ENCODE measurements at regions of chr9 and their contacts with region 1.

Region 1: GRCh38 chr9:19102631-19103345 is at the start of gene HAUS6:
- DNase-seq: peak; percentile 98
- ATAC-seq: peak; percentile 96
- H3K4me3 Mint-ChIP-seq: peak within 1 kb of the TSS; percentile 98
- H3K27ac Mint-ChIP-seq: peak within 1 kb of the TSS; percentile 97
- H3K4me1 Mint-ChIP-seq: peaks cover 21% of the 10 kb centered on the region
- H3K27me3 Mint-ChIP-seq: no peaks in the 10 kb centered on the region
- CTCF ChIP-seq: peak; percentile 36
- total RNA-seq, gene HAUS6: 30.8 to 35.8 TPM

Region 2: GRCh38 chr9:19048966-19049916 is 53.5 kb before region 1 on chr9 and contains the start of gene RRAGA:
- CTCF ChIA-PET with region 1: interaction called, 3 read pairs
- POLR2A ChIA-PET with region 1: interaction called, 5 read pairs
- intact Hi-C with region 1: loop called (anchors 2 kb)
- DNase-seq: peak; percentile 96
- ATAC-seq: peak; percentile 93
- H3K4me3 Mint-ChIP-seq: peak within 1 kb of the TSS; percentile 98
- H3K27ac Mint-ChIP-seq: peak within 1 kb of the TSS; percentile 97
- H3K4me1 Mint-ChIP-seq: peaks cover 26% of the 10 kb centered on the region
- H3K27me3 Mint-ChIP-seq: no peaks in the 10 kb centered on the region
- CTCF ChIP-seq: peak; percentile 71
- total RNA-seq, gene RRAGA: 53.6 to 56.3 TPM

Region 3: DNA sequence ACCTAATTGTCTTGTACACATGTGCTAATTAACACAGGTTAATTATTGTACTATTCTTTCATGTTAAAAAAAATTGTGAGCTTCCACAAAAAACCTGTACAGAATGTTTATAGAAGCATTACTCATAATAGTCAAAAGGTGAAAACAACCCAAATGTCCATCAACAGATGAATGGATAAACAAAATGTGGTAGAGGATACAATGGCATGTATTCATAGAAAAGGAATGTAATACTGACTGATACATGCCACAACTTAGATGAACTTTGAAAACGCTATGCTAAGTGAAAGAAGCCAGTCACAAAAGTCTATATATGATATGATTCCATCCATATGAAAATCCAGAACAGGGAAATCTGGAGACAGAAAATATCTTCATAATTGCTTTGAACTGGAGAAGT is 28.0 kb before region 1 on chr9:
- CTCF ChIA-PET with region 1: no interaction called
- POLR2A ChIA-PET with region 1: no interaction called
- intact Hi-C with region 1: no loop called
- DNase-seq: no peak
- ATAC-seq: no peak
- H3K4me3 Mint-ChIP-seq: no peak overlapping the region
- H3K27ac Mint-ChIP-seq: no peak overlapping the region
- H3K4me1 Mint-ChIP-seq: no peaks in the 10 kb centered on the region
- H3K27me3 Mint-ChIP-seq: no peaks in the 10 kb centered on the region
- CTCF ChIP-seq: no peak

Region 4: GRCh38 chr9:19127881-19128500 is 25.2 kb after region 1 on chr9:
- CTCF ChIA-PET with region 1: interaction called, 3 read pairs
- POLR2A ChIA-PET with region 1: interaction called, 4 read pairs
- intact Hi-C with region 1: loop called (anchors 2 kb)
- DNase-seq: peak; percentile 52
- ATAC-seq: peak; percentile 14
- H3K4me3 Mint-ChIP-seq: peak overlapping the region; percentile 83
- H3K27ac Mint-ChIP-seq: peak overlapping the region; percentile 97
- H3K4me1 Mint-ChIP-seq: peaks cover 53% of the 10 kb centered on the region
- H3K27me3 Mint-ChIP-seq: no peaks in the 10 kb centered on the region
- CTCF ChIP-seq: no peak

Region 5: GRCh38 chr9:19161257-19162025 is 58.7 kb after region 1 on chr9:
- CTCF ChIA-PET with region 1: no interaction called
- POLR2A ChIA-PET with region 1: interaction called, 7 read pairs
- intact Hi-C with region 1: loop called (anchors 2 kb)
- DNase-seq: peak; percentile 82
- ATAC-seq: peak; percentile 97
- H3K4me3 Mint-ChIP-seq: peak overlapping the region; percentile 41
- H3K27ac Mint-ChIP-seq: peak overlapping the region; percentile 91
- H3K4me1 Mint-ChIP-seq: peaks cover 24% of the 10 kb centered on the region
- H3K27me3 Mint-ChIP-seq: no peaks in the 10 kb centered on the region
- CTCF ChIP-seq: no peak